T-cell (primary cell): ENCODE measurements at regions of chr5 and their contacts with region 1.

Region 1: GRCh38 chr5:131382407-131383395 is 118.8 kb downstream of the CDC42SE2 start:
- DNase-seq: peak in 33 of 35 experiments; percentile 8 to 88 (median 51)
- ATAC-seq: peak; percentile 68 to 74 (median 72)
- H3K4me3 ChIP-seq: no peak overlapping the region
- H3K4me3 Mint-ChIP-seq: peak overlapping the region; percentile 34 to 69 (median 38)
- H3K27ac ChIP-seq: peak overlapping the region; percentile 99
- H3K27ac Mint-ChIP-seq: peak overlapping the region; percentile 97 to 100
- H3K4me1 ChIP-seq: peaks cover 61 to 68% of the 10 kb centered on the region in 2 experiments
- H3K4me1 Mint-ChIP-seq: peaks cover 85 to 92% (median 91%) of the 10 kb centered on the region in 3 donors
- H3K27me3 ChIP-seq: no peaks in the 10 kb centered on the region
- H3K27me3 Mint-ChIP-seq: no peaks in the 10 kb centered on the region

Region 2: DNA sequence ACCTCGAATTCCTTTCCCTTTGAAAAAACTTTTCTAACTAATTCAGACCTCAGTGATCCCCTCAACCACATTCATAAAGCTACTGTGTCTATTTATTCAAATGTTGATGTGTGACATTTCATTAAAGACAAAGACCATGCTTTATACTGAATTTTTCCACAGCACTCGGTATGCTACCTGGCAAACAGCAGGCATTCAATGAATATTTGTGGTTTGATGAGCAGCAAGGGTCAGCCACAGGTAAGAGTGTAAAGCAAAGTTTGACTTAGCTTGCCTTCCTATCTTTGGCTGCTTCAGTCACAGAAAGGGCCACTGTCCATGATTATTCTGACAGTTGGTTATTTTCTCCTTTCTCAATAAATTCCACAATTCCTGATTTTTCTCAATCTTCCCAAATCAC is 124.0 kb before region 1 on chr5:
- CTCF ChIA-PET with region 1: interaction called, 9 to 31 read pairs
- POLR2A ChIA-PET with region 1: interaction called, 5 to 36 read pairs
- DNase-seq: no peak
- ATAC-seq: no peak
- H3K4me3 ChIP-seq: peak overlapping the region in 1 of 2 donors; percentile 3
- H3K4me3 Mint-ChIP-seq: peak overlapping the region; percentile 67 to 79 (median 75)
- H3K27ac ChIP-seq: peak overlapping the region; percentile 88
- H3K27ac Mint-ChIP-seq: peak overlapping the region; percentile 92 to 98
- H3K4me1 ChIP-seq: peaks cover 49 to 64% of the 10 kb centered on the region in 2 experiments
- H3K4me1 Mint-ChIP-seq: peaks cover 76 to 84% (median 84%) of the 10 kb centered on the region in 3 donors
- H3K27me3 ChIP-seq: no peaks in the 10 kb centered on the region
- H3K27me3 Mint-ChIP-seq: no peaks in the 10 kb centered on the region

Region 3: DNA sequence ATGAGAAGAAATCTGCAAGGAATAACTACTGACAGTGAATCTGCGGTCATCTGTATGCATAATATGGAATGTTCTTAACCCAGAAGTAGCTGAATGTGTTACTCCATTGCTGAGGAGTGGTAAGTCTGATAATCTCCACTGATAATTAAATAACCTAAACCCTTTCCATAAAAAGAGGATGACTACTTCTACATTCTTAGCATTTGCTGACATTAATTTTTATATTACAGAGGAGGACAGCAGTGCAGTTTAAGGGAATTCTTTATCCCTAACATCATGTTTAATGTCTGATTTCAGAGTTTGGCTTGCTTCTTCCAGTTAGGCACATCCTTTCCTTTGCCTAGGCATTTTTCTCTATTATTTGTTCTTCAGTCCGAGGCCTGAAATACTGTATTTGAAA is 66.7 kb before region 1 on chr5:
- CTCF ChIA-PET with region 1: interaction called in 1 of 2 experiments, 10 read pairs
- POLR2A ChIA-PET with region 1: no interaction called
- DNase-seq: no peak
- ATAC-seq: peak in 1 of 4 experiments; percentile 14
- H3K4me3 ChIP-seq: no peak overlapping the region
- H3K4me3 Mint-ChIP-seq: peak overlapping the region in 1 of 3 donors; percentile 83
- H3K27ac ChIP-seq: peak overlapping the region; percentile 9
- H3K27ac Mint-ChIP-seq: peak overlapping the region in 1 of 2 donors; percentile 30
- H3K4me1 ChIP-seq: peaks cover 8 to 42% of the 10 kb centered on the region in 2 experiments
- H3K4me1 Mint-ChIP-seq: peaks cover 75 to 85% (median 84%) of the 10 kb centered on the region in 3 donors
- H3K27me3 ChIP-seq: no peaks in the 10 kb centered on the region
- H3K27me3 Mint-ChIP-seq: no peaks in the 10 kb centered on the region

Region 4: DNA sequence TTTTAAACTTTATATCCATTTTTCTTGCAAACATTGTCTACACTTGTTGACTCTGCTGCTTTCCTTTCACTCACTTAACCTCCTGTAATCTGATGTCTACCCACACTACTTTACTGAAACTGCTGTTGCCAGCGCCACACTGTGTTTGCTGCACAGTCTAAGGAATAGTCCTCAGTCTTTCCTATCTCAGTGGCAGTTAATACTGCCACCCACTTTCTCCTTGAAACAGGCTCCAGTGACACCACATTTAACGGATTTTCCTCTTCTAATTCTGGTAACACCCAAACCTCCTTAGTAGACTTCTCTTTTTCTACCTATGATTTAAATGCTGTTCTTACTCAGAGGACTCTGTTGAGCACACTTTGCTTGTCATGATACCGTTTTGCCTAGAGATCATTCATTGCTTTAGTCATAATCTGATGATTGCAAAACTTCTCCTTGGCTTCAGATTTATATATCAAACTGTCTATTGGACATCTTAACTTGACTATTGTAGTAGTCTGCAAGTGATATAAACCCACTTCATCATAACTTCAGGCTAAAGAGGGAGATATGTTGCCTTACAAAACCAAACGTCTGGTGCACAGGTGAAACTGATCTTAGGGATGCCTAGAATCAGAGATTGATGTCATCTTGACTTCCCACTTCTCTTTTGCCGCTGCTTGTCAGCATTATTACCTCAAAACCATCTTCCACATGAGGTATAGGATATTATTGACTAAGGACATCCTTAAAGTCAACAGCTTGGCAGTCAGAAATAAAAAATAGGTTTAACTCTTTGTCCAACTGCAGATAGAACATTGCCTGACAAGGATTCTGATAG is 24.8 kb before region 1 on chr5:
- CTCF ChIA-PET with region 1: interaction called, 4 to 21 read pairs
- POLR2A ChIA-PET with region 1: interaction called in 1 of 2 experiments, 7 read pairs
- DNase-seq: peak in 10 of 35 experiments; percentile 16 to 59 (median 34)
- ATAC-seq: peak; percentile 68 to 76 (median 71)
- H3K4me3 ChIP-seq: no peak overlapping the region
- H3K4me3 Mint-ChIP-seq: peak overlapping the region; percentile 3 to 57 (median 27)
- H3K27ac ChIP-seq: peak overlapping the region; percentile 66
- H3K27ac Mint-ChIP-seq: peak overlapping the region; percentile 81 to 90
- H3K4me1 ChIP-seq: peaks cover 30 to 33% of the 10 kb centered on the region in 2 experiments
- H3K4me1 Mint-ChIP-seq: peaks cover 75 to 81% (median 77%) of the 10 kb centered on the region in 3 donors
- H3K27me3 ChIP-seq: no peaks in the 10 kb centered on the region
- H3K27me3 Mint-ChIP-seq: no peaks in the 10 kb centered on the region